Right ventricle myocardium inferior (tissue), 1 donor: ENCODE measurements at regions of chr1 and their contacts with region 1.

Region 1: DNA sequence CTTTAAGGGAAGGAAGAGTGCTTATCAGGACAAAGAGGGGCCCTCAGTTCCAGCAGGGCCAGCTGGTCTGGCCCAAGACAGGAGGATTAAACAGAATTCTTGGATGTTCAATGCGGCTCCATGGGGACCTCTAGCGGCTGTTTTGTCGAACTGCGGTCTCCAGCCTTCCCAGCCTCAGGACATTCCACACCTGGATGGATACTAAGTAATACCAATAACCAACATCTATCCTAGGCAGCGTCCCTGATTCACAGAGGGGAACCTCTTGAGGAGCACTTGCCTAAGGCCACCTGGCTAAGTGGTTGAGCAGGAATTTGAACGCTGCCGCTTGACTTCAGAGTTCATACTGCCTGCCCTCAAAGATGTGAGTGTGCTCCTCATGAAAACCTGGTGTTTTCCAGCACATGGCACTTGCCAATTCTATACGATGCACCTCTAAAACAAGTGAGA is 15.5 kb upstream of the CD247 start:
- DNase-seq: peak; percentile 66
- ATAC-seq: peak; percentile 74

Region 2: GRCh38 chr1:167066333-167067122 is 467.3 kb before region 1 on chr1:
- intact Hi-C with region 1: loop called (anchors 5 kb)
- DNase-seq: peak; percentile 86
- ATAC-seq: peak; percentile 84

Region 3: DNA sequence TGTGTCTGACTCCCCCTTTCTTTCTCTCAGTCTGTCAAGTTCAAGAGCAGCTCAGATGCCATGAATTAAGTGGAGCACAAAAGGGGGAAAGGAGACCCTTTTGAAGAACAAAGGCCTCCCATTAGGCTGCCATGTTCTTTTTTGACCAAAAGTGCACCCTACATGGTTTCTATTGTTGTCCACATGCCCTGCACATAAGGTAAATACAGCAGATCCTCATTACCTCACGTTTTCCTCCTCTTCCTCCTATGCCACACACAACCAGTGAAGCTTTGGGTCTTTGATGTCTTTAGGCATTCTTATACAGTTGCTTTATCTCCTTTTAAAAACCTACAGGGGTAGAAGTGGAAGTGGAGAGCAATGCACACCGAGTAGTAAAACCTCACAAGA is 265.5 kb before region 1 on chr1:
- intact Hi-C with region 1: loop called (anchors 2 kb)
- DNase-seq: no peak
- ATAC-seq: no peak

Region 4: GRCh38 chr1:167330601-167331293 is 203.1 kb before region 1 on chr1:
- intact Hi-C with region 1: no loop called
- DNase-seq: no peak
- ATAC-seq: no peak

Region 5: GRCh38 chr1:167401260-167401873 is 132.5 kb before region 1 on chr1:
- intact Hi-C with region 1: loop called (anchors 5 kb)
- DNase-seq: no peak
- ATAC-seq: no peak

Region 6: DNA sequence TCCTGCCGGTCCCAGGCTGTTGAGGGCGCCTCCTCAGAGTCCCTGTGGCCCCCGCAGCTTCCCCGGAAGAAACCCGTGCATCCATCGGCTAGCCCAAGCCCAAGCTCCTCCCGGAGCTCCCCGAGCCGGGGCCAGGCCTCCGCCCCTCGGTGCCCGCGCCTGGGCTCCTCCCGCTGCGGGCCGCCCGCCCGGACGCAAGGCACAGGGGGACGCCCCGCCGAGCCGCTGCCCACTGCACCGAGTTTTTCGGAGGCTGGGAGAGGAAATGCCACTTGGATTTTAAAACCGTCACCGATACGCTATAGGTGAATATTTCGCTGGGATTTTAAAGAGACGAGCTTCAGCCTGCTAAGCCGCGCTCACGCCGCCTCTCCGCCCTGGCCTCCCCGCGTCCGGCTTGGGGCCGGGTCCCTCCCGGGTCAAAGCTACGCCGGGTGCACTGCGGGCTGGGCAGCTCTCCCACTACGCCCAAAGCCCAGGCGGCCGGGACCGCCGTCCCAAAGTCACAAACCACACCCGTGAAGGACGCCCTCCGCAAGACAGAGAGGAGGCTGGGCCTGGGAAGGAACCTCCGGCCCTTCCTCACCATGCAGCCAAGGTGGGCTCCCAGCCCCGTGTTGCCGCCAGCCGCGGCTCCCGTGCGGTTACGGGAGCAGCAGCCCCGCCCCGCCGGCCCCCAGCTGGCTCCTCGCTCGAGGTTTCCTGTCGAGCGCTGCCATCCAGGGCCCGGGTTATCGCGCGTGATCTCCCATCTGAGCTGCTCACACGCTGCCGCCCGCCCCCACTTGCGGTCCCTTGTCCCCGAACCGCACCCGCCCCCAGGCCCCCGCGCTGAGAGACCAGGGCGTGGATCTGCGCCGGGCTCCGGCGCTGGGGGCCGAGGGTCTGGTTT is 78.7 kb before region 1 on chr1:
- intact Hi-C with region 1: loop called (anchors 5 kb)
- DNase-seq: peak; percentile 83
- ATAC-seq: peak; percentile 91